ENCODE measurements at regions of chr3 and their contacts with region 1.

Region 1: GRCh38 chr3:67896130-67896529 is 241.7 kb upstream of the SUCLG2 start:
- DNase-seq: no peak
- H3K4me3 Mint-ChIP-seq: no peak overlapping the region
- H3K27ac Mint-ChIP-seq: no peak overlapping the region
- H3K4me1 Mint-ChIP-seq: no peaks in the 10 kb centered on the region
- H3K27me3 Mint-ChIP-seq: peaks cover 23% of the 10 kb centered on the region
- CTCF ChIP-seq: no peak

Region 2: GRCh38 chr3:67906261-67906660 is 10.1 kb after region 1 on chr3:
- CTCF ChIA-PET with region 1: no interaction called
- POLR2A ChIA-PET with region 1: no interaction called
- intact Hi-C with region 1: loop called (anchors 1 kb)
- DNase-seq: no peak
- H3K4me3 Mint-ChIP-seq: no peak overlapping the region
- H3K27ac Mint-ChIP-seq: no peak overlapping the region
- H3K4me1 Mint-ChIP-seq: no peaks in the 10 kb centered on the region
- H3K27me3 Mint-ChIP-seq: peaks cover 10% of the 10 kb centered on the region
- CTCF ChIP-seq: no peak

Region 3: DNA sequence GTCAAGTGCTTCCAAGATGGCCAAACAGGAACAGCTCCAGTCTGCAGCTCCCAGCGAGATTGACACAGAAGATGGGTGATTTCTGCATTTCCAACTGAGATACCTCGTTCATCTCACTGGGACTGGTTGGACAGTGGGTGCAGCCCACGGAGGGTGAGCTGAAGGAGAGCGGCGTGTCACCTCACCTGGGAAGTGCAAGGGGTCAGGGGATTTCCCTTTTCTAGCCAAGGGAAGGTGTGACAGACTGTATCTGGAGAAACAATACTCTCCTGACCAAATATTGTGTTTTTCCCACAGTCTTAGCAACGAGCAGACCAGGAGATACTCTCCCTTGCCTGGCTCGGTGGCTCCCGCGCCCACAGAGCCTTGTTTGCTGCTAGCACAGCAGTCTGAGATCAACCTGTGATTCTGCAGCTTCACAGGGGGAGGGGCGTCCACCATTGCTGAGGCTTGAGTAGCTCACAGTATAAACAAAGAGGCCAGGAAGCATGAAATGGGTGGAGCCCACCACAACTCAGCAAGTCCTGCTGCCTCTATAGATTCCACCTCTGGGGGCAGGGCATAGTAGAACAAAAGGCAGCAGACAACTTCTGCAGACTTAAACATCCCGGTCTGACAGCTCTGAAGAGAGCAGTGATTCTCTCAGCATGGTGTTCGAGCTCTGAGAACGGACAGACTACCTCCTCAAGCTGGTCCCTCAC is 51.8 kb after region 1 on chr3:
- CTCF ChIA-PET with region 1: no interaction called
- POLR2A ChIA-PET with region 1: no interaction called
- intact Hi-C with region 1: no loop called
- DNase-seq: no peak
- H3K4me3 Mint-ChIP-seq: no peak overlapping the region
- H3K27ac Mint-ChIP-seq: no peak overlapping the region
- H3K4me1 Mint-ChIP-seq: no peaks in the 10 kb centered on the region
- H3K27me3 Mint-ChIP-seq: no peaks in the 10 kb centered on the region
- CTCF ChIP-seq: no peak